Transverse colon (tissue), 4 donors: ENCODE measurements at regions of chr12 and their contacts with region 1.

Region 1: GRCh38 chr12:73798523-73798922 is 739.1 kb upstream of the ATXN7L3B start:
- DNase-seq: no peak
- H3K4me3 ChIP-seq: no peak overlapping the region
- H3K27ac ChIP-seq: no peak overlapping the region
- H3K4me1 ChIP-seq: no peaks in the 10 kb centered on the region
- H3K27me3 ChIP-seq: no peaks in the 10 kb centered on the region
- CTCF ChIP-seq: no peak
- EP300 ChIP-seq: no peak
- POLR2A ChIP-seq: no peak

Region 2: DNA sequence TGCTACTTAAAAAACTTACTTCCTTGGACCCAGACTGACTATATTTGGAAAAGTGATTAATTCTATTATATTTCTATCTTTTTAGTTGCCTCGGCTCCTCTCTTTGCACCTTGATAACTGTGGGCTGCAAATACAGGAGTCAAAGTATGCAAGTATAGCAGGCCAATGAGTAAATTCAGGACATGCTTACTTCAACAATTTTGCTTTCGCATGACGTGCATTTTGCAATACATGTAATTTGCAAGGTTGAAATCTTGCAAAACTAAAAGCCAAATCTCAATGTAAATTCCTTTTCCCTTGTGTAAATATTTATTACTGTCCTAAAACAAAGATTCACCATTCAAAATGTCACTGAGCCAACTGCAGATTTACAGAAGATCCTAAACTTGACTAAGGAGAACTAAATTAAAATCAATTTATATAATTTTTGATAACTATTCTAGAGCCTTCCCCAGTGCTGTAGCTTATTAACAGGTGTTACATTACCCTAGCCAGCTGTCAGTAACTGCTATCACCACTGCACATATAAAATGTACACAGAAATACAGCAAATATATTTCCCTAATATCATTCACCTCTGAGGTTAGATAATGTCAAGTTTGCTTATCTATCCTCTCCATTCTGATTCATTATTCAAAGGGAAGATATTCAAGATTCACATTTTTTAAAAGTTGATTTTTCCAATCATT is 456.8 kb before region 1 on chr12:
- in situ Hi-C with region 1: no loop called
- intact Hi-C with region 1: no loop called
- DNase-seq: no peak
- H3K4me3 ChIP-seq: no peak overlapping the region
- H3K27ac ChIP-seq: no peak overlapping the region
- H3K4me1 ChIP-seq: no peaks in the 10 kb centered on the region
- H3K27me3 ChIP-seq: no peaks in the 10 kb centered on the region
- CTCF ChIP-seq: no peak
- EP300 ChIP-seq: no peak
- POLR2A ChIP-seq: no peak

Region 3: GRCh38 chr12:73892201-73892600 is 93.7 kb after region 1 on chr12:
- in situ Hi-C with region 1: loop called in 1 of 4 experiments (anchors 25 kb)
- intact Hi-C with region 1: no loop called
- DNase-seq: no peak
- H3K4me3 ChIP-seq: no peak overlapping the region
- H3K27ac ChIP-seq: no peak overlapping the region
- H3K4me1 ChIP-seq: no peaks in the 10 kb centered on the region
- H3K27me3 ChIP-seq: no peaks in the 10 kb centered on the region
- CTCF ChIP-seq: no peak
- EP300 ChIP-seq: no peak
- POLR2A ChIP-seq: no peak